HCT116 (cell line): ENCODE measurements at regions of chr18 and their contacts with region 1.

Region 1: DNA sequence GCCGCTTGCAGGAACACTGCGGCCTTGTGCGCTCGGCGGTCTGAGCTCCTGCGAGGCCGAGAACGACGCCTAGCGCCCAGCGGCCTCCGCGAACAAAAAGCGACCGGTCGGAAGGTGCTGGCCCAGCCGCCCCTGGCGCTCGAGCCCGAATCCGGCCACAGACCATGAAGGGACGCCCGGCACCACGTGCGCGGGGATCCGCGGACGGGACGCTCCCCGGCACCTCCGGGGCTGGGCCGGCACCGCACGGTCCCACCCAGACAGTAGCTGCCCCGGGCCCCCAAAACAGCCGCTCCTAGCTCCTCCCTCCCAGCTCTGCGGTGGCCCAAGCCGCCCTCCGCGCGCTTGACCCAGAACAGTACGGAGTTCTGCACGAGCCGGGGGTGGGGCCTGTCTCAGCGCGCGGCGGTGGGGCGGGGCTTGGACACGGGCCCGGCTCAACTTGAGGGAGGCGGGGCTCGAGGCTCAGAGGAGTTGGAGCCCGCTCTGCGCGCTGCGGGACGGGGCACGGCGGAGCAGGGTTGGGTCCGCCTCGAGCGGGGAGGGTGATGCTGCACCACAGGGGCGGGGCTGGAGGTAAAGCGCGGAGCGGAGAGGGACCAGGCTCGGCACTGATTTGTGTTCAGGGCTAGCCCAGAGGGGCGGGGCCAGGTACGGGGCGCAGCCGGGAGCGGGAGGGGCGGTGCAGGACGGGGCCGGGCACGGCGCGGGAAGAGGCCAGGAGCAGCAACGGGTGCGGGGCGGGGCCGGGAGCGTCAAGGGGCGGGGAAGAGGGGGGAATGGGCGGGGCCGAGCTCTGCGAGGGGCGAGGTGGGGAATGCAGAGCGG is 538 bp upstream of the IMPA2 start:
- DNase-seq: peak; percentile 93
- ATAC-seq: peak; percentile 89
- H3K4me3 ChIP-seq: peak overlapping the region; percentile 42 to 60
- H3K27ac ChIP-seq: peak overlapping the region; percentile 91
- H3K4me1 ChIP-seq: peaks cover 18 to 44% of the 10 kb centered on the region in 2 experiments
- H3K27me3 ChIP-seq: no peaks in the 10 kb centered on the region
- CTCF ChIP-seq: no peak
- POLR2A ChIP-seq: peak; percentile 26
- RAD21 ChIP-seq: no peak

Region 2: GRCh38 chr18:11752116-11752911 is 228.5 kb before region 1 on chr18:
- CTCF ChIA-PET with region 1: no interaction called
- POLR2A ChIA-PET with region 1: no interaction called
- RAD21 ChIA-PET with region 1: no interaction called
- intact Hi-C with region 1: no loop called
- DNase-seq: no peak
- ATAC-seq: no peak
- H3K4me3 ChIP-seq: no peak overlapping the region
- H3K27ac ChIP-seq: no peak overlapping the region
- H3K4me1 ChIP-seq: no peaks in the 10 kb centered on the region
- H3K27me3 ChIP-seq: 0 out of 2 replicates have a peak, but pooled peaks cover under 1% of the 10 kb centered on the region
- CTCF ChIP-seq: no peak
- POLR2A ChIP-seq: no peak
- RAD21 ChIP-seq: no peak

Region 3: GRCh38 chr18:11851146-11851805 is 129.5 kb before region 1 on chr18 and contains the start of gene CHMP1B:
- CTCF ChIA-PET with region 1: no interaction called
- POLR2A ChIA-PET with region 1: no interaction called
- RAD21 ChIA-PET with region 1: no interaction called
- intact Hi-C with region 1: loop called (anchors 2 kb)
- DNase-seq: peak; percentile 92
- ATAC-seq: peak; percentile 92
- H3K4me3 ChIP-seq: peak within 1 kb of the TSS; percentile 82 to 99
- H3K27ac ChIP-seq: peak within 1 kb of the TSS; percentile 55
- H3K4me1 ChIP-seq: peaks cover 22 to 45% of the 10 kb centered on the region in 2 experiments
- H3K27me3 ChIP-seq: no peaks in the 10 kb centered on the region
- CTCF ChIP-seq: no peak
- POLR2A ChIP-seq: peak; percentile 75
- RAD21 ChIP-seq: no peak
- total RNA-seq, gene CHMP1B: 30.3 TPM

Region 4: GRCh38 chr18:11937874-11938478 is 42.8 kb before region 1 on chr18:
- CTCF ChIA-PET with region 1: interaction called, 15 read pairs
- POLR2A ChIA-PET with region 1: interaction called, 6 read pairs
- RAD21 ChIA-PET with region 1: no interaction called
- intact Hi-C with region 1: no loop called
- DNase-seq: peak; percentile 54
- ATAC-seq: peak; percentile 73
- H3K4me3 ChIP-seq: no peak overlapping the region
- H3K27ac ChIP-seq: no peak overlapping the region
- H3K4me1 ChIP-seq: peaks cover 5 to 8% of the 10 kb centered on the region in 2 experiments
- H3K27me3 ChIP-seq: no peaks in the 10 kb centered on the region
- CTCF ChIP-seq: peak; percentile 65 to 88 (median 87)
- POLR2A ChIP-seq: no peak
- RAD21 ChIP-seq: peak; percentile 87

Region 5: DNA sequence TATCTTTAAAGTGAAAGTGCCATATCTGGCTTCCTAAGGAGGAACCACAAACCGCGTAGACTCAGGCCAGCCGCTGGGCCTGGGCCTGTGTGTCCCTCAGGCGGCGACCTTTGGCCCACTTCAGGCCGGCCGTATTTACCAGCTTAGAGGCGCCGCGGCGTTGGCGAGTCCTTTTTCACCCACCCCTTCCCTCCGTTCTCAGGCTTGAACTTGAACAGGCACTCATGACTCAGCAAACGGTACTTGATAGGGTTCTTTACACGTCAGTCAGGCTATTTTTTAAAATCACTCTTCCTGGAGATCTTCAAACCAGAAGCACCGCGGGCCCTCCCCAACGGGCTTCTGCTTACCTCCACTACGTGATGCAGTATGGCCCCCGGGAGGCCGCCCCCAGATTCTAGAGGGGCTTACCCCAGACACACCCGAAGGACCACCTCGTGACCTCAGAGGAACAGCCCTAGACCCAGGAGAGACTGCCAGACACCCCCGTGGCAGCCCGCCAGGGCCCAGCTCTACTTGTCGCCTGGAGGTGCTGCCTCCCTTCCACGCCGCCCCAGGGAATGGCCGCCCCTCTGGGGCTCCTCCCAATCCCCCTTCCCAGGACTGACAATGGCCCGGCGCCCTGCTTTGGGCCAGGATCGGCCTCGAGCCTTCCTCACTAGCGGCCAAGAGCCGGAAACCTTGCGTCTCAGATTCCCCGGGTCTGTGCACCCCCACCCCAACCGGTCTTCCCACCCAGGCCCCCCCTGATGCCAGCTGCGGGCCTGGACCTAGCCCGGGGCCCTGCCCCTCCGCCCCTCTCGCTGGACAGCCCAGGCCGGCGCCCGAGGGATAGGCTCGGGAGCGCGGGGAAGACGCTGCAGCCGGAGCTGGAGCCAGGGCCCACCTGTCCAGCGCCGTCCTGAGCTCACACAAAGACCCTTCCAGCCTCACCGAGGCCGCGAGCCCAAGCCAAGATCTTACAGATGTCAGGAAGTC is 33.3 kb before region 1 on chr18:
- CTCF ChIA-PET with region 1: interaction called, 3 read pairs
- POLR2A ChIA-PET with region 1: interaction called, 6 read pairs
- RAD21 ChIA-PET with region 1: no interaction called
- intact Hi-C with region 1: loop called (anchors 2 kb)
- DNase-seq: peak; percentile 90
- ATAC-seq: peak; percentile 88
- H3K4me3 ChIP-seq: peak overlapping the region; percentile 28 to 37
- H3K27ac ChIP-seq: peak overlapping the region; percentile 55
- H3K4me1 ChIP-seq: peaks cover 33 to 47% of the 10 kb centered on the region in 2 experiments
- H3K27me3 ChIP-seq: no peaks in the 10 kb centered on the region
- CTCF ChIP-seq: no peak
- POLR2A ChIP-seq: no peak
- RAD21 ChIP-seq: no peak

Region 6: GRCh38 chr18:11995445-11996189 is 14.8 kb after region 1 on chr18:
- CTCF ChIA-PET with region 1: interaction called, 33 read pairs
- POLR2A ChIA-PET with region 1: interaction called, 5 read pairs
- RAD21 ChIA-PET with region 1: interaction called, 3 to 5 read pairs
- intact Hi-C with region 1: no loop called
- DNase-seq: peak; percentile 41
- ATAC-seq: peak; percentile 96
- H3K4me3 ChIP-seq: no peak overlapping the region
- H3K27ac ChIP-seq: no peak overlapping the region
- H3K4me1 ChIP-seq: peaks cover 6 to 19% of the 10 kb centered on the region in 2 experiments; a peak in 3 of 4 replicates
- H3K27me3 ChIP-seq: no peaks in the 10 kb centered on the region
- CTCF ChIP-seq: peak; percentile 73 to 89 (median 88)
- POLR2A ChIP-seq: no peak
- RAD21 ChIP-seq: peak; percentile 91